ENCODE measurements at regions of chr1 and their contacts with region 1.

Region 1: GRCh38 chr1:61049850-61050540 is 32.4 kb upstream of the NFIA start:
- DNase-seq: peak; percentile 69 to 93 (median 84)
- ATAC-seq: peak; percentile 95
- H3K4me3 ChIP-seq: peak overlapping the region; percentile 64
- H3K4me3 Mint-ChIP-seq: peak overlapping the region; percentile 69 to 88 (median 80)
- H3K27ac ChIP-seq: no peak overlapping the region
- H3K27ac Mint-ChIP-seq: peak overlapping the region in 1 of 9 donors; percentile 38
- H3K4me1 ChIP-seq: peaks cover 10 to 15% of the 10 kb centered on the region in 2 donors
- H3K4me1 Mint-ChIP-seq: peaks cover 17 to 37% (median 26%) of the 10 kb centered on the region in 7 donors
- H3K27me3 ChIP-seq: peaks cover 4 to 6% of the 10 kb centered on the region in 2 donors
- H3K27me3 Mint-ChIP-seq: peaks cover 39 to 61% (median 45%) of the 10 kb centered on the region in 5 donors

Region 2: DNA sequence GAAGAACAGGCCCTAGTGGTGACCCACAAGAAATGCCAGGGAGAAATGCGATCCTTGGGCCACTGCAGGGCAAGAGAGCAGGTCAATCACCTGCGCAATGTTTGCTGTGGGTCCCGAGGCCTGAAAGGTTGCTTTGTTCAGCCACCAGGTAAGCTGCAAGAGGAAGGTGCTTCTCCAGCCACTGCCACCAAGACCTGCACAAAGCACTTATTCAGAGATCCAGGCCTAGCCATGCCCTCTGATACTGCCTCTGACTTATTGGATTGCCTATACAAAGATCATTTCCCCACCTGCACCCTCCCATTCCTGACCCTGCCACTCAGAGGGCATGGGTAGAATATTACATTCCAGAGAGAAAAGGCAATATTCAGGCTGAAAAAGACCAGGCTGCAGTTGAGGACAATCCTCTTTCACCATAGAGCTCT is 317.0 kb before region 1 on chr1:
- CTCF ChIA-PET with region 1: no interaction called
- POLR2A ChIA-PET with region 1: no interaction called
- intact Hi-C with region 1: no loop called
- DNase-seq: peak in 1 of 9 donors; percentile 0
- ATAC-seq: no peak
- H3K4me3 ChIP-seq: no peak overlapping the region
- H3K4me3 Mint-ChIP-seq: no peak overlapping the region
- H3K27ac ChIP-seq: no peak overlapping the region
- H3K27ac Mint-ChIP-seq: no peak overlapping the region
- H3K4me1 ChIP-seq: no peaks in the 10 kb centered on the region
- H3K4me1 Mint-ChIP-seq: no peaks in the 10 kb centered on the region
- H3K27me3 ChIP-seq: no peaks in the 10 kb centered on the region
- H3K27me3 Mint-ChIP-seq: peaks cover 0 to 7% (median 5%) of the 10 kb centered on the region in 5 donors

Region 3: DNA sequence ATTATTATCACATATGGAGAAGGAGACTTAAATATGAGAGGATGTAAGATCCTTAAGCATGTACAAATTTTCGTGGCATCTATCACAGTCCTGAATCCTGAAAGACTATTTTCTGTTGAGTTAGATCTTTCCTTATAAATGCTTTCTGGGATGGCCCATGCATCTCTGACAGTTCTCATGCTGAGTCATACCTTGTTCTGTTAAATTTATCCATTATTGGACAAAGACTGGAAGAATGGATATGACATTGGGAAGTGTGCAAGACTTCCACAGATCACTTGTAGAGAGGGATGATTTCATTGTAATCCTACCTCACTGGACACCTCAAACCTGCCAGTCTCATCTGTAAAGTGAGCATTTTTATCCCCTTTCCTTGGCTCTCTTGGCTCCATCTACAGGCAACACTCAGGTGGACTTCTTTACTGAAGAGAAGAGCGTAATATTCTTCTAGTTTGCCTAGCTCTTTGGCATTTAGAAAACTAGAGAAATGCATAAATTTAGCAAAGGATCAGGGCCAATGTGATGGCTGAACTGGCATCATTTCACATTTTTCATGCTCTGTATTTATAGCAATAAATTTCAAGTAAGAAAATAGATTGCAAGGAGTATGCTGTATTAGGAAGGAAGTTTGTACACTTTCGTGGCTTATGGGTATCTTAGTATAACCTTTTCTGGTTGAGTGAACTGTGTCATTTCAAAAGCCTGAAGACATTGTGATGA is 160.6 kb after region 1 on chr1:
- CTCF ChIA-PET with region 1: interaction called, 18 read pairs
- POLR2A ChIA-PET with region 1: no interaction called
- intact Hi-C with region 1: loop called (anchors 1 to 10 kb)
- DNase-seq: peak in 5 of 9 donors; percentile 4 to 30 (median 13)
- ATAC-seq: no peak
- H3K4me3 ChIP-seq: no peak overlapping the region
- H3K4me3 Mint-ChIP-seq: no peak overlapping the region
- H3K27ac ChIP-seq: no peak overlapping the region
- H3K27ac Mint-ChIP-seq: no peak overlapping the region
- H3K4me1 ChIP-seq: no peaks in the 10 kb centered on the region
- H3K4me1 Mint-ChIP-seq: no peaks in the 10 kb centered on the region
- H3K27me3 ChIP-seq: no peaks in the 10 kb centered on the region
- H3K27me3 Mint-ChIP-seq: peaks cover 0 to 21% (median 0%) of the 10 kb centered on the region in 5 donors

Region 4: DNA sequence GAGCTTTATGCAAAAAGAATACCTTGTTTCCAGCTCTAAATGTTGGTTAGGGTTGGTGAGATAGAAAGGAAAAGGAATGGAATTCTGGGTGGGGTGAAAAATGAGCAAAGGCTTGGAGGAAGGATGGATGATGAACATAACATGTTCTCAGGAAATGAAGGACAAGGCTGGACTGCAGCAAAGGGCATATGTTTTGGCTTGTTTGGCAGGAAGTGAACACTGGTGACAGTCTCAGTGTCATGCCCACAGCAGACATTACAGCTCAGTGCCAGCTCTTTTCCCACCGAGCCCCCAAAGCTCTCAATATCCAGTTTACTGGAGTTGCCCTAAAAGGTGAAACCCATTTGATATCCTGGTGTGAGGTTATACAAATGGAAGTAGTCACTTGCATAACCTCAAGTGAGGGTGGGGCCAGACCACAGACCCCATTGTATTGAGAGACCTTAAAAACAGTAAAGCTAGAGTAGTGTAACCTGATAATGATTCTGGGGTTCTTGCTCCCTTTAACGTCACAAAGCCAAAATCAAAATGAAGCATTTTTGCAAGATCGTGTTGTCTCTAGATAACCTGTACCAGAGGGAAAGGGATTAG is 302.9 kb after region 1 on chr1:
- CTCF ChIA-PET with region 1: interaction called, 6 read pairs
- POLR2A ChIA-PET with region 1: no interaction called
- intact Hi-C with region 1: loop called in 1 of 2 experiments (anchors 2 kb)
- DNase-seq: no peak
- ATAC-seq: no peak
- H3K4me3 ChIP-seq: no peak overlapping the region
- H3K4me3 Mint-ChIP-seq: no peak overlapping the region
- H3K27ac ChIP-seq: no peak overlapping the region
- H3K27ac Mint-ChIP-seq: peak overlapping the region in 1 of 9 donors; percentile 5
- H3K4me1 ChIP-seq: no peaks in the 10 kb centered on the region
- H3K4me1 Mint-ChIP-seq: peaks cover 0 to 2% (median 0%) of the 10 kb centered on the region in 7 donors
- H3K27me3 ChIP-seq: no peaks in the 10 kb centered on the region
- H3K27me3 Mint-ChIP-seq: peaks cover 0 to 8% (median 0%) of the 10 kb centered on the region in 5 donors

Region 5: DNA sequence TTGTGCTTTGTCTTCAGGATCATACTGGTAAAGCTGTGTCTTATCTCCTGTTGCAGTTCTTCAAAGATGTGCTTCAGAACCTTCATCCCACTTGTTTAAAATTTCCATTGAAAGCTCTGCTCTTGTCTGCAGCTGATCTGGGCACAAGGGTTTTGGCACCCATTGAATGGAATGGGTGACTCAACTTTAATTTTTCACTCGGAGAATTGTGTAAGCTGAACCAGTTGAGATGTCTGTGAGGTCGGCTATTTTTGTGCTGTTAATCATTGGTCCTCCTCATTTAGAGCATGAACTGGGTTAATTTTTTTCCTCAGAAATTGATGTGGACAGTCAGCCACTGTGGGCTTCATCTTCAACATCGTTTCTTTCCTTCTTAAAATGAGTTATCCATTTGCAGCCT is 422.9 kb after region 1 on chr1:
- CTCF ChIA-PET with region 1: no interaction called
- POLR2A ChIA-PET with region 1: no interaction called
- intact Hi-C with region 1: no loop called
- DNase-seq: no peak
- ATAC-seq: no peak
- H3K4me3 ChIP-seq: no peak overlapping the region
- H3K4me3 Mint-ChIP-seq: no peak overlapping the region
- H3K27ac ChIP-seq: no peak overlapping the region
- H3K27ac Mint-ChIP-seq: no peak overlapping the region
- H3K4me1 ChIP-seq: no peaks in the 10 kb centered on the region
- H3K4me1 Mint-ChIP-seq: no peaks in the 10 kb centered on the region
- H3K27me3 ChIP-seq: no peaks in the 10 kb centered on the region
- H3K27me3 Mint-ChIP-seq: peaks cover 0 to 16% (median 10%) of the 10 kb centered on the region in 5 donors

Region 6: DNA sequence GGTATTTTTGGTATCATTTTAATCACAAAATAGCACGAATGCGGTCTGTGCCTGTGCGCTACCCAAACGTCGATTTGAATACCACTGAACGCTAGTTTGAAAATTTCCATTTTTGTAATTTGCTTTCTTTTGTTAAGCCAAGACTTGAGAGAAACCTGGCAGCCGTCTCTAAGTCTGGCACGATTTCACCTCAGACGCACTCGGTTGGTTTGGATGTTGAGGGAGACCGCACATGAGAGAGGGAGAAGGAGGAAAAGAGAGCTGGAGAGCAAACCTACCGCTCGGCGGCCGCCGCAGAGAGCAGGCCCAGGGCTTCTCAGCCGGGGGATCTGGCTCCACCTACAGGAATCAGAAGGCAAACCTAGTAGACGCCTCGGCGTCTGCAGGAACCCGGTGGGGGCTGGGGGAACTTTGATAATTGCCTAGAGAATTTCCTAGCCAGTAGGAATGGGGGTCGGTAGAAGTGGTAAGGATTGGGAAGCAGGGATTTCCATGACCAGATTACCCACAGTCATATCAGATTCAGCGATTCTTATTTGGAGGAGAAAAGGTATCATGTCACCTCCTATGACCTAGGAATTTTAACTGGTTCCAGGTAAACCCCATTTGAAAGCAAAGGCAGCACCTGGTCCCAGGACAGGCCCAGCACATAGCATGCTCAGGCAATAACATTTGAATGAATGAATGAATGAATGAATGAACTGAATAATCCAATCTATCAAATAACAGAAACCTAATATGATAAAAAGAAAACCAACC is 591.8 kb after region 1 on chr1:
- CTCF ChIA-PET with region 1: no interaction called
- POLR2A ChIA-PET with region 1: no interaction called
- intact Hi-C with region 1: loop called (anchors 1 to 10 kb)
- DNase-seq: peak; percentile 41 to 72 (median 53)
- ATAC-seq: peak; percentile 93
- H3K4me3 ChIP-seq: peak overlapping the region; percentile 36
- H3K4me3 Mint-ChIP-seq: peak overlapping the region; percentile 47 to 92 (median 84)
- H3K27ac ChIP-seq: no peak overlapping the region
- H3K27ac Mint-ChIP-seq: peak overlapping the region in 6 of 9 donors; percentile 69 to 91 (median 82)
- H3K4me1 ChIP-seq: peaks cover 0 to 7% of the 10 kb centered on the region in 2 donors
- H3K4me1 Mint-ChIP-seq: peaks cover 5 to 20% (median 15%) of the 10 kb centered on the region in 7 donors
- H3K27me3 ChIP-seq: no peaks in the 10 kb centered on the region
- H3K27me3 Mint-ChIP-seq: peaks cover 0 to 7% (median 0%) of the 10 kb centered on the region in 5 donors